ENCODE measurements at regions of chr3 and their contacts with region 1.

Region 1: DNA sequence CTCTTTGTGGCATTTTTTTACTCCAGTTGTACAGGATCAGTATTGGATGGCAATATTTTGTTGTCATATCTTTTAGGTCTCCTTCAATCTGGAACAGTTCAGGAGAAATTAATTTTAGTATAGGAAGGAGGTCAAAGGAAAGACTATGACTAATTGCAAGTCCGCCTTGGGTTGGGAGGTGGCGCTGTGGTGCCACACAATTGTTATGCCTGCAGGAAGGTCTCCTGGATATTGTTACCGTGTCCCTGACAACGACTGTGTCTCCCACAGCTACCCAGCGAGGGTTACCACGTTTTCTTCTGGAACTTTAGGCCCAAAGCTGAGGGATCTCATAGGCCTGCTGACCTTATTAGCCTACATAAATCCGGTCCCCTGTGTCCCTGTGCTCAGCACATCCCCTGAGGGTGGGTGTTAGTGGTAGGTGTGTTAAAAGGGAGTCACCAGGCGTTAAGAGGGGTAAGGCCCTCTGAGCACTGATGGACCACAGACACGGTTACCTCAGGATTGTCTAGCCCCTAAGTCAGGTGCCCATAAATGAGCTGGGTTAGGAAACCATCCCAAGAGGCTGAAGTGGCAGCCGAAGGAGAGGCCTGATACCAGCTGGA is 31.5 kb downstream of the KCNAB1 start:
- DNase-seq: peak; percentile 48 to 74
- H3K4me3 ChIP-seq: no peak overlapping the region
- H3K27ac ChIP-seq: no peak overlapping the region
- H3K4me1 ChIP-seq: no peaks in the 10 kb centered on the region
- H3K27me3 ChIP-seq: no peaks in the 10 kb centered on the region
- CTCF ChIP-seq: peak; percentile 54 to 71 (median 70)
- POLR2A ChIP-seq: no peak

Region 2: DNA sequence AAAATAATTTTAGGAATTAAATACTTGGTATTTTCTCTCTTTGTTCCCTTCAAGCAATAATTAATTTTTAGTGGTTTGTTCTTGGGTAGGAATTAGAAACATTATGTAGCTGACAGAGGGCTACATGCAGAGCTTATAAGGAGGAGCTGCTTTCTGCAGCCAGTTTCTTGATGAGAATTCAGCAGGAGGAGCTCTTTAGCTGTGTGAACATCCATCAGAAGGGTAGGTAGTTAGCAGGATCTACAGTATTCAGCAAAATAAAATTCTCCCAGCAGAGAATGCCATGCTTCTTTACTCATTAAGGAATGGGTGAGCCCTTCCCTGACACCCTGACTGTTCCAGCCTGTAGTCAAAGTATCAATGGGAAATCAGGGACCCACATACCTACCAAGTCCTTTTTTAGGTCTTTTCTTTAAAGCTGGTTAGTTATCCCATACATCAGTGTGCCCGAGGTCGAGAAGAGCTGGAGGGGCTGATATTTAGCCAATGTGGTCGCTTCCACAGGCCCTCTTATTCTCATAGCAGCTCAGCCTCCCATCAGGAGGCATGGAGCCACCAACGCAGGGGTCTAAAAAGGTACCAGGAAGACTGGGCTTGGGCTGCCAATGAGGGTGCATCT is 22.4 kb after region 1 on chr3:
- intact Hi-C with region 1: no loop called
- DNase-seq: no peak
- H3K4me3 ChIP-seq: no peak overlapping the region
- H3K27ac ChIP-seq: no peak overlapping the region
- H3K4me1 ChIP-seq: no peaks in the 10 kb centered on the region
- H3K27me3 ChIP-seq: no peaks in the 10 kb centered on the region
- CTCF ChIP-seq: no peak
- POLR2A ChIP-seq: no peak

Region 3: GRCh38 chr3:156413293-156413892 is 261.5 kb after region 1 on chr3:
- intact Hi-C with region 1: no loop called
- DNase-seq: no peak
- H3K4me3 ChIP-seq: no peak overlapping the region
- H3K27ac ChIP-seq: no peak overlapping the region
- H3K4me1 ChIP-seq: no peaks in the 10 kb centered on the region
- H3K27me3 ChIP-seq: no peaks in the 10 kb centered on the region
- CTCF ChIP-seq: no peak
- POLR2A ChIP-seq: no peak

Region 4: GRCh38 chr3:157130467-157131251 is 978.7 kb after region 1 on chr3:
- intact Hi-C with region 1: loop called (anchors 2 kb)
- DNase-seq: peak; percentile 60 to 67
- H3K4me3 ChIP-seq: peak overlapping the region in 2 of 3 donors; percentile 39 to 58
- H3K27ac ChIP-seq: peak overlapping the region; percentile 96
- H3K4me1 ChIP-seq: peaks cover 0 to 13% of the 10 kb centered on the region in 2 donors
- H3K27me3 ChIP-seq: no peaks in the 10 kb centered on the region
- CTCF ChIP-seq: peak; percentile 66 to 72 (median 67)
- POLR2A ChIP-seq: no peak